BJ (cell line): ENCODE measurements at regions of chr3 and their contacts with region 1.

Region 1: GRCh38 chr3:127697551-127698240 is 24.9 kb downstream of the ABTB1 start:
- DNase-seq: peak; percentile 64
- H3K4me3 ChIP-seq: no peak overlapping the region
- H3K27me3 ChIP-seq: no peaks in the 10 kb centered on the region
- CTCF ChIP-seq: no peak

Region 2: GRCh38 chr3:127682561-127682960 is 15.1 kb before region 1 on chr3:
- CTCF ChIA-PET with region 1: interaction called, 13 read pairs
- POLR2A ChIA-PET with region 1: no interaction called
- DNase-seq: no peak
- H3K4me3 ChIP-seq: no peak overlapping the region
- H3K27me3 ChIP-seq: no peaks in the 10 kb centered on the region
- CTCF ChIP-seq: no peak

Region 3: DNA sequence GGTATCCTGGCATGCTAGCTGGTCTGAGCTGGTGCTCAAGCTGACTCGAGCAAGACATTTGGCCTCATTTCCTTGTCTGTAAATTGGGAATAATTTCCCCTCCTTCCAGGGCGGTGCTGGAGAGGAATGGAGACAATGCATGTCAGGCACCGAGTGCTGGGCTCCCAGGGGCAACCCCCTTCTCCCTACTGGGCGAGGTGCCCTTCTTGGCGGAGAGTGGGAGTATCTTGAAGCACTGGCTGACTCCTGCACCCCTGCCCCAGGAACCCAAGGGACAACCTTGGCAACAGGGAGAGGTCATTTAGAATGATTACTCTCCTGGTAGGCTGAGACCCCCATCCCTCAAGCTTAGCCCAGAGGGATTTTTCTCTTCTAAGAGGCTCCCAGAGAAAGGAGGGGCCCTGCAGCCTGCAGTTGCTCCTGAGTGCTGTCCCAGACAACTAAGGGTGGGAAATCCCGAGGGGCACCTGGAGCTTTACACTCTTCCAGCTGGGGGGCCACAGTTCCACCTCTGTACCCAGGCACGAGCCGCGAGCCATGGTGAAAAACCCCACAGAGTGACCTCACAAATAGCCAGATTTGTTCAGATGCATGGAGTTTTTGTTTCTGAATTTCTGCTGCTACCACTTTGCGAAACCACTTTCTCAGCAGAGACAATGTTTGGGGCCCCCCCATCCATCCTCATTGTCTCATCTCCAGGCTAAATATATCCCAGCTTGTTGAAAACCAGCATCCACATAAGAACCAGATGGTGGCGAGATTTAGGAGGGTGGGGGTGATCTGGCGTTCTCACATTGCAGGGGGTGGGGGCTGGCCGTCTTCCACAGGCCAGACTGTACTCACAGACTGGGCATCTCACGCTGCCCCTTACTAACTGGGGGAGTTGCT is 19.9 kb after region 1 on chr3:
- CTCF ChIA-PET with region 1: interaction called, 4 read pairs
- POLR2A ChIA-PET with region 1: interaction called, 14 read pairs
- DNase-seq: no peak
- H3K4me3 ChIP-seq: no peak overlapping the region
- H3K27me3 ChIP-seq: no peaks in the 10 kb centered on the region; the same call in 1 of the 2 replicates
- CTCF ChIP-seq: no peak

Region 4: GRCh38 chr3:127779747-127780146 is 82.1 kb after region 1 on chr3:
- CTCF ChIA-PET with region 1: interaction called, 16 read pairs
- POLR2A ChIA-PET with region 1: no interaction called
- DNase-seq: no peak
- H3K4me3 ChIP-seq: no peak overlapping the region
- H3K27me3 ChIP-seq: no peaks in the 10 kb centered on the region
- CTCF ChIP-seq: no peak

Region 5: DNA sequence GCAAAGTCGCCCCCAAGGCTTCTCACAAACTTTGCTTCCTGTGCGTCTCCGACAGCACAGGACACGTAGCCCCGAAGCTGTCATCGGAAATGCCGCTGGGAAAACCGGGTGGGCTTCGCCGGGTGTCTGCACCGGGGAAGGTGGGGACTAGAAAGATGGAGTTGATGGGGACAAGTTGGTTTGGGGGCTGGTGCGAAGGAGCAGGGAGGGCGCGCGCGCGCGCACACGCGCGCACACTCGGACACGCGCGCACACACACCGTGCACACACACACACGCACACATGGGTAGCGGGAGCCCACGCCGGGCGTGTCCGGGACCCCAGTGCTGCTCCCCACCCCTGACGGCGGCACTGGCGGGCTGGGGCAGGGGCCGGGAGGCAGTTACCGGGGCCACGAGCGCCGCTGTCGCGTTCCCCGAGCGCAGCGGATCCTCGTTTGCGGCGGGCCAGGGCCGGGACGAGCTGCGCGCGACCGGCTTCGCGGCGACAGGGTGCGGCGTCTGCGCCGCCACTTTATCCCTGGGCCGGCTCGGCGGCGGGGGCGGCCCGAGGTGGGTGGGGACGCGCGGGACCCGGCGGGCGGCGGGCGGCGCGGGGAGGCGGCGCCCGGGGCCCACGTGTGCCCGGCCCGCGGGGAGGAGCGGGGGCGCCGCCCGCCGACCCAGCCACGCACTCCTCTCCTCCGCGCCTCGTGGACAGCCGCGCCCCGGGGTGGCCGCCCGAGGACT is 125.2 kb after region 1 on chr3:
- CTCF ChIA-PET with region 1: interaction called, 42 read pairs
- POLR2A ChIA-PET with region 1: no interaction called
- DNase-seq: no peak
- H3K4me3 ChIP-seq: peak overlapping the region; percentile 92
- H3K27me3 ChIP-seq: no peaks in the 10 kb centered on the region
- CTCF ChIP-seq: no peak